Endothelial cell of umbilical vein (primary cell): ENCODE measurements at regions of chr12 and their contacts with region 1.

Region 1: GRCh38 chr12:14948672-14949071 is 10.3 kb upstream of the ERP27 start:
- DNase-seq: peak; percentile 93
- H3K4me3 ChIP-seq: peak overlapping the region in 1 of 3 experiments; percentile 36
- H3K27ac ChIP-seq: peak overlapping the region; percentile 94
- H3K4me1 ChIP-seq: peaks cover 72% of the 10 kb centered on the region
- H3K27me3 ChIP-seq: no peaks in the 10 kb centered on the region
- CTCF ChIP-seq: no peak
- POLR2A ChIP-seq: peak; percentile 82

Region 2: DNA sequence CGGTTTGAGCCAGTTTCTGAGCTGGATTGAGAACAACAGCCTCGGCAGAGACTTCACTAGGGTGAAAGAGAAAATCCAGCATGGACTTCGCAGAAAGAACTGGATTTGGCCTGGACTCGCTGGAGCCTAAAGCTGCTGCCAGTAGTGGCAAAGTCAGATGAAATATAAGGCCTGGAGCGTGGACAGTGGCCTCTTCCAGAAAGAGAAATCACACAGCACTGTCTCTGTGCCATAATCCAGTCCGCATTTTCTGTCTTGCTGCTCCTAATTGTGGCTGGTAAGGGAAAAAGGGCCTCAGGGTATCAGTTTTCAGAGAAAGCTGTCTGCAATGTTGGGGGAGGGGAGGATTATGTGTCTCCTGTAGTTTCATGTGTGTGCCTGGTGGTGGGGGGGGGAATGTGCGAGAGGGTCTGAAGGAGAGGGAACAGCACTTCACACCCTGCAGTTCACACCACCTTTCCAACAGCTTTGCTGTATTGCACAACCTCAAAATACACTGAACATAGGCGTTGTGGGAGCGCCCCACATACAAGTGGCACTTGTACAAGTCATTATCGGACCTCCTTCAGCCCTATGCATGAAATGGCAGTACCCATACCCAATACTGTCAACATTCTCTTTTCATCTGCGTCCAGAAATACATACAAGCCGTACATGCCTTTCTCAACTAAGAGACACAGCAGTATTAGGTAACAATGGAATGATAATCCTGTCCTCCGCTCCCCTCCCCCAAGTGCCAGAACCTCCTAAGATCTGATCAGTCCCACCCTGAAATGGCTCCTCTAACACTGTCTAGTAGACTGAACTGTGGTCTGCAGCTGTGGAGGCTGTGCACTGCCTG is 690.7 kb before region 1 on chr12:
- CTCF ChIA-PET with region 1: no interaction called
- POLR2A ChIA-PET with region 1: no interaction called
- dilution Hi-C with region 1: no loop called
- intact Hi-C with region 1: loop called (anchors 10 kb)
- DNase-seq: peak; percentile 99
- H3K4me3 ChIP-seq: no peak overlapping the region
- H3K27ac ChIP-seq: peak overlapping the region; percentile 87
- H3K4me1 ChIP-seq: peaks cover 46% of the 10 kb centered on the region
- H3K27me3 ChIP-seq: no peaks in the 10 kb centered on the region
- CTCF ChIP-seq: no peak
- POLR2A ChIP-seq: no peak

Region 3: GRCh38 chr12:14836302-14837210 is 112.1 kb before region 1 on chr12:
- CTCF ChIA-PET with region 1: no interaction called
- POLR2A ChIA-PET with region 1: no interaction called
- dilution Hi-C with region 1: loop called (anchors 10 kb)
- intact Hi-C with region 1: no loop called
- DNase-seq: peak; percentile 86
- H3K4me3 ChIP-seq: peak overlapping the region in 1 of 3 experiments; percentile 31
- H3K27ac ChIP-seq: peak overlapping the region; percentile 83
- H3K4me1 ChIP-seq: peaks cover 56% of the 10 kb centered on the region
- H3K27me3 ChIP-seq: no peaks in the 10 kb centered on the region
- CTCF ChIP-seq: no peak
- POLR2A ChIP-seq: no peak

Region 4: GRCh38 chr12:14910090-14910915 is 38.4 kb before region 1 on chr12:
- CTCF ChIA-PET with region 1: no interaction called
- POLR2A ChIA-PET with region 1: no interaction called
- dilution Hi-C with region 1: no loop called
- intact Hi-C with region 1: loop called (anchors 1 kb)
- DNase-seq: peak; percentile 87
- H3K4me3 ChIP-seq: no peak overlapping the region
- H3K27ac ChIP-seq: peak overlapping the region; percentile 69
- H3K4me1 ChIP-seq: peaks cover 27% of the 10 kb centered on the region
- H3K27me3 ChIP-seq: no peaks in the 10 kb centered on the region
- CTCF ChIP-seq: no peak
- POLR2A ChIP-seq: peak; percentile 32

Region 5: DNA sequence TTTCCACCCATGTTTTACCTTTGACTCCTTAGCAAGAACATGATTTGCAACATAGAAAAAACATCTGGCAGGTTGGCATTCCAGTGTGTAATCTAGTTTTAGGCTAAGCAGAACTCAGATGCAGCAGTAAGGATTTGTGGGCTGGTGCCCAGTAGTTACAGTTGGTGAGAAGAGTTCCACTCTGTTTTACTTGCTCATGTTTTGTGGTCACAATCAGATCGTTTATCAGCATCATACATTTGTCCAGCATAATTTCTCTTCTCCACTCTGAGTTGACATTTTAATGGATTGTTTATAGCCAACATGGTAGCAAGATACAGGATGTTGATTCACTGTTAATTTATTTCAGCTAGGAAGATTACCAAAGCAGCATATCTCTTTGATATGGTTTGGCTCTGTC is 144.2 kb after region 1 on chr12:
- CTCF ChIA-PET with region 1: no interaction called
- POLR2A ChIA-PET with region 1: no interaction called
- dilution Hi-C with region 1: no loop called
- intact Hi-C with region 1: no loop called
- DNase-seq: no peak
- H3K4me3 ChIP-seq: no peak overlapping the region
- H3K27ac ChIP-seq: no peak overlapping the region
- H3K4me1 ChIP-seq: no peaks in the 10 kb centered on the region
- H3K27me3 ChIP-seq: no peaks in the 10 kb centered on the region
- CTCF ChIP-seq: no peak
- POLR2A ChIP-seq: no peak

Region 6: DNA sequence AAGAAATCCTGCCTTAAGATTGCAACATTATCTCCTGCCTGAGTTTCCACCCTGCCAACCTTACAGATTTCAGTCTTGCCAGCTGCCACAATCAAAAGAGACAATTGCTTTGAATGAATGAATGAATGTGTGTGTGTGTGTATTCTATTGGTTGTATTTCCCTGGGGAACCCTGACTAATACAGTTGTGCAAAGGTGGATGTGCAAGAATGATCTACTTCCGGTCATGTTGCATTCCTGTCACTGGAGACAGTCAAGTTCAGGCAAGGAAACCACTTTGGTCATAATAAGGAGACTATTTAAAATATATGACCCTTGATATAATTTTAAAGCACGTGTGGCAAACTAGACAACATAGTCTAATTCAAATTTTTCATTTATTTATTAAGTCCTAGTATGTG is 259.5 kb after region 1 on chr12:
- CTCF ChIA-PET with region 1: no interaction called
- POLR2A ChIA-PET with region 1: no interaction called
- dilution Hi-C with region 1: no loop called
- intact Hi-C with region 1: no loop called
- DNase-seq: no peak
- H3K4me3 ChIP-seq: no peak overlapping the region
- H3K27ac ChIP-seq: no peak overlapping the region
- H3K4me1 ChIP-seq: no peaks in the 10 kb centered on the region
- H3K27me3 ChIP-seq: peaks cover 0 to 2% of the 10 kb centered on the region in 2 experiments
- CTCF ChIP-seq: no peak
- POLR2A ChIP-seq: no peak

Region 7: DNA sequence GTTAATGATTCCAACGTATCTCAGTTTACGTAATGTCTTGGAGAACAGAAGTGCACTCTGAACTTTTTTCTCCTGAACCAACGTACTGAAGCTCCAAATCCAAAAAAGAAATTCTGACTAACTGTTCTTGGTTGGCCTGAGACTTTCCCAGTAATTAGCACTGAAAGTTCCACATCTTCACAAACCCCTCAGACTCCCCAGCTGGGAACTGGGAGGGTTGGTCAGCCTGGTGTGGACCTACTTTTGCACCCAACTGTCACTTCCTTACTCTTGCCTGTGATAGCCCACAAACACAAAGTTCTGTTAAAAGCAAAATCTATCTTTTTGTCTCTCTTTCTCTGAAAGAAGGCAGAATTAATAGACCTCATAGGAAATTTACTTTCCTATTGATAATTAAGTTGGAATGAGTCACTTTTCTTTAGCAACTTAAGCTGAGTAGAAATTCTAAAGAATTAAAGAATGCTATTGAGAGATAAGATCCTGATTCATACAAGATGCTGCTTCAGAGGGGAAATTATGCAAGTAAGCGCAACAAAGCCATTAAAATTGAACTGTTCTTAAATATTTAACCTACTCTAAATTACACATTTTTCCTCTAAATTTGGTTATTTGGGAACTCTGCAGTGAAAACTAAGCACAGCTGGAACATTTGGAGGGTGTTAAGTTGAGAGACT is 685.5 kb after region 1 on chr12:
- CTCF ChIA-PET with region 1: no interaction called
- POLR2A ChIA-PET with region 1: no interaction called
- dilution Hi-C with region 1: no loop called
- intact Hi-C with region 1: loop called (anchors 2 kb)
- DNase-seq: peak; percentile 53
- H3K4me3 ChIP-seq: no peak overlapping the region
- H3K27ac ChIP-seq: peak overlapping the region; percentile 23
- H3K4me1 ChIP-seq: peaks cover 70% of the 10 kb centered on the region
- H3K27me3 ChIP-seq: no peaks in the 10 kb centered on the region
- CTCF ChIP-seq: no peak
- POLR2A ChIP-seq: no peak